HEK293 (cell line): ENCODE measurements at regions of chr9 and their contacts with region 1.

Region 1: GRCh38 chr9:36728651-36729520 is 156.2 kb downstream of the MELK start:
- H3K4me3 ChIP-seq: no peak overlapping the region
- H3K27ac ChIP-seq: no peak overlapping the region
- H3K4me1 ChIP-seq: no peaks in the 10 kb centered on the region
- CTCF ChIP-seq: peak; percentile 58; the same call in 1 of the 2 replicates

Region 2: GRCh38 chr9:36597412-36598178 is 131.3 kb before region 1 on chr9:
- CTCF ChIA-PET with region 1: interaction called, 13 read pairs
- POLR2A ChIA-PET with region 1: no interaction called
- H3K4me3 ChIP-seq: no peak overlapping the region
- H3K27ac ChIP-seq: no peak overlapping the region
- H3K4me1 ChIP-seq: no peaks in the 10 kb centered on the region
- CTCF ChIP-seq: no peak

Region 3: GRCh38 chr9:36632892-36633291 is 96.0 kb before region 1 on chr9:
- CTCF ChIA-PET with region 1: interaction called, 17 read pairs
- POLR2A ChIA-PET with region 1: interaction called, 3 read pairs
- H3K4me3 ChIP-seq: no peak overlapping the region
- H3K27ac ChIP-seq: no peak overlapping the region
- H3K4me1 ChIP-seq: no peaks in the 10 kb centered on the region
- CTCF ChIP-seq: no peak

Region 4: DNA sequence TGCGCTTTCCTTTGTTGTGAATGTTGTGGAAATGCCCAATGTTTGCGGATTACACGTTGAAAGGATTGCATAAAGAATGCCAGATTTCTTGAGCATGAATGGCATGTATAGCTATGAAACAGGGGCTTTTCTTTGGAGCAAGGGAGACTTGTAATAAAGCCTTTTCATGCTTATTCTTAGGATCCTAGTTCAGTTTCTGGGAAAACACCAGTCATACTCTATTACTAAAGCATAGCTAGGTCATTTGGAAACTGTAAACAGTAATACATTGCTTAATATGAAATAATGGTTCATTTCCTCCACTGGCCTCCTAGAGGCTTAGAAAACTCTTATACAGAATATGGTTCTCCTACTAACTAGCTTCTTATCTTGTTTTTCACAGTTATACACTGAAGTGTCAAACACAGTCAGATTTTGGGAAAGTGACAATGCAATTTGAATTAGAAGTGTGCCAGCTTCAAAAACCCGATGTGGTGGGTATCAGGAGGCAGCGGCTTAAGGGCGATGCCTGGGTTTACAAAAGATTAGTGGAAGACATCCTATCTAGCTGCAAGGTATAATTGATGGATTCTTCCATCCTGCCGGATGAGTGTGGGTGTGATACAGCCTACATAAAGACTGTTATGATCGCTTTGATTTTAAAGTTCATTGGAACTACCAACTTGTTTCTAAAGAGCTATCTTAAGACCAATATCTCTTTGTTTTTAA is 52.0 kb before region 1 on chr9:
- CTCF ChIA-PET with region 1: interaction called, 11 read pairs
- POLR2A ChIA-PET with region 1: no interaction called
- H3K4me3 ChIP-seq: no peak overlapping the region
- H3K27ac ChIP-seq: no peak overlapping the region
- H3K4me1 ChIP-seq: no peaks in the 10 kb centered on the region
- CTCF ChIP-seq: no peak

Region 5: GRCh38 chr9:36913393-36914211 is 184.7 kb after region 1 on chr9:
- CTCF ChIA-PET with region 1: no interaction called
- POLR2A ChIA-PET with region 1: no interaction called
- H3K4me3 ChIP-seq: no peak overlapping the region
- H3K27ac ChIP-seq: no peak overlapping the region
- H3K4me1 ChIP-seq: peaks cover 8% of the 10 kb centered on the region; the same call in 1 of the 2 replicates
- CTCF ChIP-seq: no peak